A673 (cell line): ENCODE measurements at regions of chr5 and their contacts with region 1.

Region 1: DNA sequence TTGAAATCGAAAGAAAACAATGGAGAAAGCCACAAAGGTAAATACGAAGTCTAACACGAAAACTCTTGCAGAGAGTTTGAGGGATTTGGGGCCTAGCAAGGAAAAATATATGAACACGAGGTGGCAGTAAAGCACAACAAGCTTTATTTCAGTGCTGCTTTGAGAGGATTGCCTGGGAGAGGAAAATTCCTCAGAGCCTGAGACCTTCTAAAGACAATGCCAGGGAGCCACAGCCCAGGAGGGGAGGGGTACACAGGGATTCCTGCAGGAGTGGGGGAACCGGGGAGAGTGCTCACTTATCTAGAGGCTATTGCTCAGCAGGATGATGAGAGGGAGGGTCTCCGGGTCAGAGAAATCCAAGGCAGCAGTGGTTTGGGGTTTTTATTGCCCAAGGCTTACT is 134.9 kb upstream of the ADCY2 start:
- DNase-seq: peak; percentile 62
- H3K4me3 ChIP-seq: no peak overlapping the region
- H3K27ac ChIP-seq: no peak overlapping the region
- H3K4me1 ChIP-seq: no peaks in the 10 kb centered on the region
- H3K27me3 ChIP-seq: no peaks in the 10 kb centered on the region
- CTCF ChIP-seq: peak; percentile 68

Region 2: GRCh38 chr5:7274180-7274579 is 13.1 kb after region 1 on chr5:
- CTCF ChIA-PET with region 1: no interaction called
- POLR2A ChIA-PET with region 1: no interaction called
- intact Hi-C with region 1: no loop called
- DNase-seq: no peak
- H3K4me3 ChIP-seq: no peak overlapping the region
- H3K27ac ChIP-seq: no peak overlapping the region
- H3K4me1 ChIP-seq: no peaks in the 10 kb centered on the region
- H3K27me3 ChIP-seq: no peaks in the 10 kb centered on the region
- CTCF ChIP-seq: no peak

Region 3: DNA sequence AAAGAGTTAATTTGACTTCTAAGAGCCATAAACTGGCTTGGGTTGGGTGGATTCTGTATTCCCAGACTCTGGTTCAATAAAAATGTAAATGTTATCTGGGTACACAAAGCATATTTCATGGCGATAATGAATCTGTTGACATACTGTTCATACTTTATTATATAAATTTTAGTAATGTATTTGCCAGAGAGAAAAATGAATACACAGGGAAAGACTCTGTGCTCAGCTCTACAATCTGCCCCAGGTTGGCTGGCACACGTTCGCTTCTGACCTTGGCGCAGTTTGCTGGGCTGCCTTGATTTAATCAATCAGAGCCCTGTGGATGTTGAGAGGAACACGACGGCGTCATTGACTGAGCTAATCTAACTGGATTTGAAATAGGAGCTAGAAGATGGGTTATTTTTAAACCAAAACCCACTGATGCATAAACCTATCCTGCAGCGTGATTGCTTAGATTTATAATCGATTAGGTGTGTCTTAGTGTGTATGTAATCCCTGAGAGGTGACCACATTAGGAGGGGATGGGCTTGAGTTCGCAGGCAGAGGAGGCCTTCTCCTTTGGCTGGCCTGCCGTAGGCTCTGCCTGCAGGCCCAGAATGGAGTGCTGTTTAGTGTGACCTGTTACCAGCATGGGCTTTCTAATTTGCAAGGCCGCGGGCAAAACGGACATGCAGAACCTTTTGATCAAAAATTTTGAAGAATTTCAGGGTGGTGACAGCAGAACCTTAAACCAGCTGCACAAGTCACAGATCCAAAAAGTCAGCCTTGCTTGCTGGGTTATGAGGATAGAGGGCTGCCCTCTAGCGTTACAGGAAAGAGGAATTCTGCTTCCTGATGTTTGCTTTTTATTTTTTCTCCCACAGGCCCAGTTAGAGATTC is 131.0 kb after region 1 on chr5:
- CTCF ChIA-PET with region 1: interaction called, 6 read pairs
- POLR2A ChIA-PET with region 1: no interaction called
- intact Hi-C with region 1: loop called (anchors 1 kb)
- DNase-seq: peak; percentile 60
- H3K4me3 ChIP-seq: no peak overlapping the region
- H3K27ac ChIP-seq: no peak overlapping the region
- H3K4me1 ChIP-seq: no peaks in the 10 kb centered on the region
- H3K27me3 ChIP-seq: peaks cover 17% of the 10 kb centered on the region
- CTCF ChIP-seq: peak; percentile 74

Region 4: GRCh38 chr5:7518947-7519560 is 258.0 kb after region 1 on chr5:
- CTCF ChIA-PET with region 1: no interaction called
- POLR2A ChIA-PET with region 1: no interaction called
- intact Hi-C with region 1: loop called (anchors 5 kb)
- DNase-seq: peak; percentile 26
- H3K4me3 ChIP-seq: no peak overlapping the region
- H3K27ac ChIP-seq: no peak overlapping the region
- H3K4me1 ChIP-seq: no peaks in the 10 kb centered on the region
- H3K27me3 ChIP-seq: no peaks in the 10 kb centered on the region
- CTCF ChIP-seq: peak; percentile 52

Region 5: GRCh38 chr5:7533941-7534340 is 272.9 kb after region 1 on chr5:
- CTCF ChIA-PET with region 1: no interaction called
- POLR2A ChIA-PET with region 1: no interaction called
- intact Hi-C with region 1: no loop called
- DNase-seq: no peak
- H3K4me3 ChIP-seq: no peak overlapping the region
- H3K27ac ChIP-seq: no peak overlapping the region
- H3K4me1 ChIP-seq: no peaks in the 10 kb centered on the region
- H3K27me3 ChIP-seq: no peaks in the 10 kb centered on the region
- CTCF ChIP-seq: no peak

Region 6: DNA sequence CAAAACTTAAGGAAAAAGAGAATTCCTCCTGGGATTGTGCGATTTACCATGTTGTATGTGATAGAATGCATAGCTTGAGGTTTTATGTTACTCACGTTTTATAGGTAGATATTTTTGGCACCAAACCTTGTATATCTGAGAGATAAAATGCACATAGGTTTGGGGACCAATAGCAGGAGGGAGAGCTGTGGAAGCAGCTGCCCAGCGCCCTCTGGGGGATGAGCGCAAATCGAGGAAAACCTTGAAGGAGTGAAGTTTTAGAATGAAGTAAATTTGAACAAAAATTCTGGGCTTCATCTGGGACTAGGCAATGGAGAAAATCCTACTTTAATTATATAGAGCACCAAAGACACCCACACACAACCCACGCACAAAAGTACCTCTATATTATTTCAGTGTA is 331.9 kb after region 1 on chr5:
- CTCF ChIA-PET with region 1: no interaction called
- POLR2A ChIA-PET with region 1: no interaction called
- intact Hi-C with region 1: loop called (anchors 1 kb)
- DNase-seq: peak; percentile 23
- H3K4me3 ChIP-seq: no peak overlapping the region
- H3K27ac ChIP-seq: no peak overlapping the region
- H3K4me1 ChIP-seq: no peaks in the 10 kb centered on the region
- H3K27me3 ChIP-seq: no peaks in the 10 kb centered on the region
- CTCF ChIP-seq: peak; percentile 63

Region 7: GRCh38 chr5:7745882-7746610 is 485.0 kb after region 1 on chr5:
- CTCF ChIA-PET with region 1: interaction called, 3 read pairs
- POLR2A ChIA-PET with region 1: no interaction called
- intact Hi-C with region 1: loop called (anchors 2 kb)
- DNase-seq: peak; percentile 73
- H3K4me3 ChIP-seq: no peak overlapping the region
- H3K27ac ChIP-seq: no peak overlapping the region
- H3K4me1 ChIP-seq: no peaks in the 10 kb centered on the region
- H3K27me3 ChIP-seq: no peaks in the 10 kb centered on the region
- CTCF ChIP-seq: peak; percentile 96

Region 8: GRCh38 chr5:7815892-7816534 is 555.0 kb after region 1 on chr5:
- CTCF ChIA-PET with region 1: no interaction called
- POLR2A ChIA-PET with region 1: no interaction called
- intact Hi-C with region 1: loop called (anchors 5 kb)
- DNase-seq: peak; percentile 76
- H3K4me3 ChIP-seq: no peak overlapping the region
- H3K27ac ChIP-seq: no peak overlapping the region
- H3K4me1 ChIP-seq: no peaks in the 10 kb centered on the region
- H3K27me3 ChIP-seq: peaks cover 11% of the 10 kb centered on the region
- CTCF ChIP-seq: peak; percentile 92